Natural killer cell (primary cell): ENCODE measurements at regions of chr13 and their contacts with region 1.

Region 1: GRCh38 chr13:106536244-106537034 is 977 bp upstream of the EFNB2 start:
- DNase-seq: peak; percentile 86 to 95
- ATAC-seq: peak; percentile 49 to 75 (median 57)
- H3K4me3 ChIP-seq: peak overlapping the region; percentile 80
- H3K4me3 Mint-ChIP-seq: peak overlapping the region; percentile 99
- H3K27ac ChIP-seq: no peak overlapping the region
- H3K27ac Mint-ChIP-seq: peak overlapping the region; percentile 72 to 83
- H3K4me1 ChIP-seq: peaks cover 26% of the 10 kb centered on the region
- H3K4me1 Mint-ChIP-seq: peaks cover 17 to 24% of the 10 kb centered on the region in 2 donors
- H3K27me3 ChIP-seq: peaks cover 27% of the 10 kb centered on the region
- H3K27me3 Mint-ChIP-seq: peaks cover 15 to 25% of the 10 kb centered on the region in 2 donors
- CTCF ChIP-seq: peak; percentile 99

Region 2: GRCh38 chr13:104571161-104571892 is 1965.1 kb before region 1 on chr13:
- intact Hi-C with region 1: loop called (anchors 10 kb)
- DNase-seq: peak in 1 of 2 donors; percentile 24
- ATAC-seq: no peak
- H3K4me3 ChIP-seq: no peak overlapping the region
- H3K4me3 Mint-ChIP-seq: no peak overlapping the region
- H3K27ac ChIP-seq: no peak overlapping the region
- H3K27ac Mint-ChIP-seq: no peak overlapping the region
- H3K4me1 ChIP-seq: no peaks in the 10 kb centered on the region
- H3K4me1 Mint-ChIP-seq: no peaks in the 10 kb centered on the region
- H3K27me3 ChIP-seq: no peaks in the 10 kb centered on the region
- H3K27me3 Mint-ChIP-seq: no peaks in the 10 kb centered on the region
- CTCF ChIP-seq: no peak

Region 3: GRCh38 chr13:106484537-106485193 is 51.8 kb before region 1 on chr13:
- intact Hi-C with region 1: no loop called
- DNase-seq: no peak
- ATAC-seq: no peak
- H3K4me3 ChIP-seq: no peak overlapping the region
- H3K4me3 Mint-ChIP-seq: no peak overlapping the region
- H3K27ac ChIP-seq: no peak overlapping the region
- H3K27ac Mint-ChIP-seq: no peak overlapping the region
- H3K4me1 ChIP-seq: no peaks in the 10 kb centered on the region
- H3K4me1 Mint-ChIP-seq: no peaks in the 10 kb centered on the region
- H3K27me3 ChIP-seq: peaks cover 9% of the 10 kb centered on the region
- H3K27me3 Mint-ChIP-seq: peaks cover 28 to 59% of the 10 kb centered on the region in 2 donors
- CTCF ChIP-seq: no peak